CD8-positive, alpha-beta T cell (primary cell): ENCODE measurements at regions of chr17 and their contacts with region 1.

Region 1: GRCh38 chr17:76408052-76408849 is 23.8 kb downstream of the SPHK1 start:
- DNase-seq: peak; percentile 53 to 81 (median 75)
- ATAC-seq: peak; percentile 92
- H3K4me3 ChIP-seq: no peak overlapping the region
- H3K4me3 Mint-ChIP-seq: no peak overlapping the region
- H3K27ac ChIP-seq: no peak overlapping the region
- H3K27ac Mint-ChIP-seq: peak overlapping the region; percentile 70
- H3K4me1 ChIP-seq: peaks cover 4% of the 10 kb centered on the region
- H3K4me1 Mint-ChIP-seq: peaks cover 9% of the 10 kb centered on the region
- H3K27me3 ChIP-seq: no peaks in the 10 kb centered on the region
- H3K27me3 Mint-ChIP-seq: no peaks in the 10 kb centered on the region
- CTCF ChIP-seq: peak; percentile 87

Region 2: DNA sequence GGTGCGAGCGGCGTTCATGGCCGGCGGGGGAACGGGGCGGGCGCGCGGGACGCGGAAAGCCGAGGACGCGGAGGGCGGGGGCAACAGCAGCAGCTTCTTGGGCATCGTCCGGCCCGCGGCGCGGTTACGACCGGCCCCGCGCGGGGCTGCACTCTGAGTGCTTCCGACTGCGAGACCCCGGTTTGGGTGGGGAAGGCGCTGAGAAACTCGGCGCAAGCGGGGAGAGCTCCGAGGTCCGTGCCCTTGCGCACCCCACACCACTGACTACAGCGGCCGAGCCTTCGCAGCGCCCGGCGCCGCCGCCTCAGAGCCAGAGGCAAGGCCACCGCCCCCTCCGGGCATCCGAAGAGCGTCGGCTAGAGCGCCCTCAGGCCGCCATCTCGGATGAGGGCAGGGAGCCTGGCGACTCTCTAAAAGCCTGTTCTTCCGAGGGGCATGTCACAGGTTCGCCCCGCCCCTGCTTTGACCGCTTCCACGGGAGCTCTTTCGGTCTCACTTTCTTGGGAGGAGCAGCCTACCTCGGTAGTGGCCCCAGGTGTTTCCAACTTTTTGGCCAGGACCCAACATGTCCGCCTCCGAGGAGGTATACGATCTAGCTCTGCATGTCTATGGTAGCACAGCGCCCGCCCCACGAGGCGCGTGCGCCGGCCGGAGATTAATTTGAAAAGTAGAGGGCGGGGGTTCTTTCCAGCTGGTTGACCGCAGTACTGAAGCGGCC is 54.5 kb before region 1 on chr17 and contains the start of gene PRPSAP1:
- CTCF ChIA-PET with region 1: no interaction called
- POLR2A ChIA-PET with region 1: no interaction called
- intact Hi-C with region 1: no loop called
- DNase-seq: peak; percentile 61 to 91 (median 83)
- ATAC-seq: peak; percentile 94
- H3K4me3 ChIP-seq: peak within 1 kb of the TSS; percentile 69 to 82
- H3K4me3 Mint-ChIP-seq: peak within 1 kb of the TSS; percentile 95
- H3K27ac ChIP-seq: peak within 1 kb of the TSS; percentile 53 to 95
- H3K27ac Mint-ChIP-seq: peak within 1 kb of the TSS; percentile 98
- H3K4me1 ChIP-seq: peaks cover 4% of the 10 kb centered on the region
- H3K4me1 Mint-ChIP-seq: peaks cover 24% of the 10 kb centered on the region
- H3K27me3 ChIP-seq: no peaks in the 10 kb centered on the region
- H3K27me3 Mint-ChIP-seq: no peaks in the 10 kb centered on the region
- CTCF ChIP-seq: peak; percentile 47
- total RNA-seq, gene PRPSAP1: 10.5 to 12.5 TPM

Region 3: GRCh38 chr17:76384222-76384986 is 23.8 kb before region 1 on chr17 and contains the start of gene SPHK1:
- CTCF ChIA-PET with region 1: interaction called, 41 read pairs
- POLR2A ChIA-PET with region 1: no interaction called
- intact Hi-C with region 1: no loop called
- DNase-seq: peak in 8 of 9 experiments; percentile 25 to 81 (median 57)
- ATAC-seq: peak; percentile 39
- H3K4me3 ChIP-seq: peak within 1 kb of the TSS; percentile 49 to 69
- H3K4me3 Mint-ChIP-seq: peak within 1 kb of the TSS; percentile 88
- H3K27ac ChIP-seq: peak within 1 kb of the TSS; percentile 8 to 42
- H3K27ac Mint-ChIP-seq: peak within 1 kb of the TSS; percentile 64
- H3K4me1 ChIP-seq: peaks cover 32% of the 10 kb centered on the region
- H3K4me1 Mint-ChIP-seq: peaks cover 13% of the 10 kb centered on the region
- H3K27me3 ChIP-seq: no peaks in the 10 kb centered on the region
- H3K27me3 Mint-ChIP-seq: peaks cover 2% of the 10 kb centered on the region
- CTCF ChIP-seq: no peak
- total RNA-seq, gene SPHK1: 2.0 to 2.6 TPM

Region 4: GRCh38 chr17:76458580-76459490 is 50.6 kb after region 1 on chr17:
- CTCF ChIA-PET with region 1: interaction called, 6 read pairs
- POLR2A ChIA-PET with region 1: no interaction called
- intact Hi-C with region 1: loop called in 1 of 2 experiments (anchors 2 kb)
- DNase-seq: no peak
- ATAC-seq: no peak
- H3K4me3 ChIP-seq: no peak overlapping the region
- H3K4me3 Mint-ChIP-seq: no peak overlapping the region
- H3K27ac ChIP-seq: no peak overlapping the region
- H3K27ac Mint-ChIP-seq: no peak overlapping the region
- H3K4me1 ChIP-seq: no peaks in the 10 kb centered on the region
- H3K4me1 Mint-ChIP-seq: no peaks in the 10 kb centered on the region
- H3K27me3 ChIP-seq: no peaks in the 10 kb centered on the region
- H3K27me3 Mint-ChIP-seq: no peaks in the 10 kb centered on the region
- CTCF ChIP-seq: no peak

Region 5: DNA sequence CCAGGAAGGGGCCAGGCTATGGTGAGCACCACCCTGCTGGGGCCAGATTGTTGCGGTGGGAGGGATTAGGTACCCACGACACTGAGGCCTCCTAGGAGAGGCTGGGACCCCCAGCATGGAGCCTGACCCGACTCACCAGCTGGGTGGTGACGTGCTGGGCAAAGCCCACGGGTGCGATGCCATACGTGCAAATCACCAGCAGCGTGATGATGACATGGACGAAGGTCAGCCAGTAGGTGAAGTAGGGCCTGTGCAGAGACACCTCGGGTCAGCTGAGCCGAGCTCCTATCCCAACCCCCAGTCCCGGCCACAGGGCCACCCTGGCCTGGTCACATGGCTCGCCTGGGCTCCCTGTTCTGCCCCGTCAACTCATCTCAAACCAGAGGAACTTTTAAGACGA is 66.6 kb after region 1 on chr17:
- CTCF ChIA-PET with region 1: no interaction called
- POLR2A ChIA-PET with region 1: no interaction called
- intact Hi-C with region 1: no loop called
- DNase-seq: no peak
- ATAC-seq: no peak
- H3K4me3 ChIP-seq: no peak overlapping the region
- H3K4me3 Mint-ChIP-seq: no peak overlapping the region
- H3K27ac ChIP-seq: no peak overlapping the region
- H3K27ac Mint-ChIP-seq: no peak overlapping the region
- H3K4me1 ChIP-seq: no peaks in the 10 kb centered on the region
- H3K4me1 Mint-ChIP-seq: no peaks in the 10 kb centered on the region
- H3K27me3 ChIP-seq: no peaks in the 10 kb centered on the region
- H3K27me3 Mint-ChIP-seq: no peaks in the 10 kb centered on the region
- CTCF ChIP-seq: no peak

Region 6: GRCh38 chr17:76501018-76501826 is 93.0 kb after region 1 on chr17 and contains the start of gene RHBDF2:
- CTCF ChIA-PET with region 1: interaction called, 96 read pairs
- POLR2A ChIA-PET with region 1: no interaction called
- intact Hi-C with region 1: loop called (anchors 1 kb)
- DNase-seq: peak; percentile 91 to 99 (median 96)
- ATAC-seq: peak; percentile 97
- H3K4me3 ChIP-seq: peak within 1 kb of the TSS; percentile 79 to 93
- H3K4me3 Mint-ChIP-seq: peak within 1 kb of the TSS; percentile 83
- H3K27ac ChIP-seq: peak within 1 kb of the TSS; percentile 73 to 85
- H3K27ac Mint-ChIP-seq: peak within 1 kb of the TSS; percentile 96
- H3K4me1 ChIP-seq: peaks cover 44% of the 10 kb centered on the region
- H3K4me1 Mint-ChIP-seq: peaks cover 47% of the 10 kb centered on the region
- H3K27me3 ChIP-seq: no peaks in the 10 kb centered on the region
- H3K27me3 Mint-ChIP-seq: no peaks in the 10 kb centered on the region
- CTCF ChIP-seq: no peak
- total RNA-seq, gene RHBDF2: 45.4 to 46.2 TPM